ENCODE measurements at regions of chr5 and their contacts with region 1.

Region 1: DNA sequence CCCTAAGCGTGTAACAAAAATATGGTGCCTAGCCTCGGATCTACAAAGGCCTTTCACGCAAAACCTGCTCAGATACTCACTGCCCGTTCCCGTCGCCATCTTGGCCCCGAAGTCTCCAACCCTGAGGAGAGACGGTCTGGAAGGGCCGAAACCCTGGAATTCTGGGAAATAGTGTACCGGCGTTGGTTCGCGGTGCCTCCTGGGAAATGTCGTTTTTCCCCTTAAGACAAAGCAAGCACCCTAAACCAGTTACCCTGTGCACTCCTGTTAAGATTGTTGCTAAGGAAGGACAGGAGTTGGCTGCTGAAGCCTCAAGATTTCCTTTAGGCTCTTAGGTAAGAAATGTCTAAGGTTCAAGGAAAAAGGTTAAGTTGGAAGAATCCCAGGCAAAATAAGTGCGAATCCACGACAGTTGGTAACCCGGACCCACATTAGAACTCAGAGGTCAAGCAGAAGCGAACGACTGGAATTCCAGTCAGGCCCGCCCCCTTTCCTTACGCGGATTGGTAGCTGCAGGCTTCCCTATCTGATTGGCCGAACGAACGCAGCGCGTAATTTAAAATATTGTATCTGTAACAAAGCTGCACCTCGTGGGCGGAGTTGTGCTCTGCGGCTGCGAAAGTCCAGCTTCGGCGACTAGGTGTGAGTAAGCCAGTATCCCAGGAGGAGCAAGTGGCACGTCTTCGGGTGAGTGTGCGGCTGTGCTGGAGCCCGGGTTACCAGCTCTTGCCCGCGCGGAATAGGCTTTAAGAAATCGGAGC is at the starts of genes BRD8 and KIF20A:
- DNase-seq: peak; percentile 100
- H3K4me3 Mint-ChIP-seq: no peak within 1 kb of the TSS
- H3K27ac Mint-ChIP-seq: no peak within 1 kb of the TSS
- H3K4me1 Mint-ChIP-seq: peaks cover 17% of the 10 kb centered on the region
- H3K27me3 Mint-ChIP-seq: no peaks in the 10 kb centered on the region
- CTCF ChIP-seq: no peak
- total RNA-seq, gene BRD8: 93.4 and 108 TPM in 2 replicates
- total RNA-seq, gene KIF20A: 19.0 and 30.6 TPM in 2 replicates

Region 2: DNA sequence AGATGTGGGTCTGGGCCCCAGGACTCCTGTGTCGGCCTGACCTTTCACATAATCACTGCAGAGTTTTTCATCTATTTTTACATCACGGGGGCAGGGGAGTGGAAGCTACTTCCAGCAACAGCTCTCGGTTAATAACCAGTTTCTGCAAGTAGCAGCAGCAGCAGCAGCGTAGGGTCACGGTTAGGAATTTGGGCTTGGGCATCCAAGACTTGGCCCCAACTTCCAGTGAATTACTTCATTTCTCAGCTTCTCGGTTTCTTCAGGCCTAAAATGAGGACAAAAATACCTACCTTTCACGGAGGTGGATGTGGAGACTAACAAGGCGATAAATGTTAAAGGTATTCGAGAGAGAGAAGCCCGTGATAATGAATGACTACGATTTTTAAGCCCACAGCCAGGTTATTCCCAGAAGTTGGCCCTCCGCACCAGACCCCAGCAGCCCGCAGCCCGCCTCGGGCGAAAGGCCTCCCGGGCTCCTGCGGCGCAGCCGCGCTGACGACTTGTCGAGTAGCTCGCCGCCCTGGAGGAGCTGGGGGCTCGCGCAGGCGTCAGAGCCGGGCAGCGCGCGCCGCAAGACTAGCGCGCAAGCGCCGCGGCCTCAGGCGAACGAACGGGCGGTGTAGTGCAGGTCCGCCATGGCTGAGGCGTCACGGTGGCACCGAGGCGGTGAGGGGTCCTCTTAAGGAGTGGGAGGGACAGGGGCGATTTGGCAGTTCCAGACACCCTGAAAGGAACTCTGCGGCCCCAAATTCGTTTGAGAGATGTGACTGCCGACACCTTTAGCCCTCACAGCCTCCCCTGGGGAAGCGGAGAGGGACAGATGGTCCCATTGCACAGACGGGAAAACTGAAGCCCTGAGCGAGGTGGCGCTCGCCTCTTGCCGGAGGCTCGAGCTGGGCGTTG is 289.6 kb before region 1 on chr5 and contains the start of gene PKD2L2:
- CTCF ChIA-PET with region 1: no interaction called
- POLR2A ChIA-PET with region 1: no interaction called
- intact Hi-C with region 1: no loop called
- DNase-seq: no peak
- H3K4me3 Mint-ChIP-seq: peak within 1 kb of the TSS; percentile 21
- H3K27ac Mint-ChIP-seq: no peak within 1 kb of the TSS
- H3K4me1 Mint-ChIP-seq: no peaks in the 10 kb centered on the region
- H3K27me3 Mint-ChIP-seq: no peaks in the 10 kb centered on the region
- CTCF ChIP-seq: no peak
- total RNA-seq, gene PKD2L2: not detected in 2 replicates

Region 3: DNA sequence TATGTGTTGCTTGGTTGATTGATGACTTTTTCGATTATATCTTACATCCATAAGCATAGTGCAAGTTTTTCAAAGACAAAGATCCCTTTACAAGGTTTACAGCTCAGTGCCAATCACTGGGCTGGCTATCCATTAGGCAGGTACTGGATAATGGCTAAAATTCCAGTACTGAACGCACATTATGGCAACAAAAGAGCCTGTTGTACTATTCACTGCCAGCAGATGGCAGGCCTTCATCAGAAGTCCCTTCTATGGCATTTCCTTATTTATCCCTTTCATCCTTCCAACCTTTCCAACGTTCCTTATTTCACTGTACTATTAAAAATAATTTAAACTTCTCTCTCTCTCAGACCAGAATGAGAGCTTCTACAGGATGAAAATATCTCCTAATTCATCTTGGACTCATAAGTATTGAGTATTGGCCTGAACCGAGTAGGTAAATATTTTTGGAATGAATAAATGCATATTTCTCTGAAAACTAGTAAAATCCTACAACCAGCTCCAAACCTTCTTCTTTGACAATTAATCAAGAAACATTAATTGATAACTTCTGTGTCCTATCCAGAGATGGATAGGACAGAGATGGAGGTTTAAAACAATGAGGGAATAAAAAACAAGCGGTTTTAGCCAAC is 101.5 kb before region 1 on chr5:
- CTCF ChIA-PET with region 1: interaction called, 8 read pairs
- POLR2A ChIA-PET with region 1: no interaction called
- intact Hi-C with region 1: loop called (anchors 1 kb)
- DNase-seq: peak; percentile 82
- H3K4me3 Mint-ChIP-seq: no peak overlapping the region
- H3K27ac Mint-ChIP-seq: no peak overlapping the region
- H3K4me1 Mint-ChIP-seq: no peaks in the 10 kb centered on the region
- H3K27me3 Mint-ChIP-seq: no peaks in the 10 kb centered on the region
- CTCF ChIP-seq: peak; percentile 95

Region 4: DNA sequence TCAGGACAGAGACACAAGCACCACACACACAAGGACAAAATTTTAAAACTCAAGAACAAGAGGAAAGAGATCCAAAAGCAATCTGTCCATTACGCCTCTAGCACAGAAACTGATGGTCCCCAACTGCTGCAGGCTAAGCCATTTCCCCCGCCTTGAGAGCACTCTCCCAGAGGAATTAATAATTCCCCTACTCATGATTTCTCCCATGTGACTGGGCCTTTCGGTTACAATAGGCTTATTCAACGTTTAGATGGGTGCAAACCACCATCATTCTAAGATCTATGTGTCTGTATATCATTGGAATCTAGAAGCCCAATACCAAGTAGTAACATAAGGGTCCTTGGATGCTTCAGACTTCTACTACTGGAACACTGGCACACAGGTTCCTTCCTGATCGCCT is 19.0 kb before region 1 on chr5:
- CTCF ChIA-PET with region 1: interaction called, 11 read pairs
- POLR2A ChIA-PET with region 1: interaction called, 9 read pairs
- intact Hi-C with region 1: no loop called
- DNase-seq: no peak
- H3K4me3 Mint-ChIP-seq: no peak overlapping the region
- H3K27ac Mint-ChIP-seq: no peak overlapping the region
- H3K4me1 Mint-ChIP-seq: no peaks in the 10 kb centered on the region
- H3K27me3 Mint-ChIP-seq: no peaks in the 10 kb centered on the region
- CTCF ChIP-seq: no peak

Region 5: DNA sequence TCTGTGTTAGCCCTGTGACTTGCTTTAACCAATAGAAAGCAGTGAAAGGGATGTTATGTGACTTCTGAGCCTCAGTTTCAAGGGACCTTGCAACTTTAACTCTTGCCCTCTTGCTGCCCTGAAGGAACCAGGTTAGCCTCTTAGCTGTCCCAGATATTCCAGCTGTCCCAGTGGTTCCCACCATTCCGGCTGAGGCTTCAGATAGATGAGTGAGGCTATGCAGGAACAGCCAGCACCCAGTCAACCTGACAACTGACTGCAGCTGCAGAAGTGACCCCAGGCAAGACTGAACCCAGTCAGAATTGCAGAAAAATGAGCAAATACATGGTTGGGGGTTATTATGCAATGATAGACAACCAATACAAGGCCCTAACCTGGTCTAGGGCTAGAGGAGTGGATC is 44.8 kb after region 1 on chr5:
- CTCF ChIA-PET with region 1: interaction called, 12 read pairs
- POLR2A ChIA-PET with region 1: interaction called, 4 read pairs
- intact Hi-C with region 1: no loop called
- DNase-seq: no peak
- H3K4me3 Mint-ChIP-seq: no peak overlapping the region
- H3K27ac Mint-ChIP-seq: no peak overlapping the region
- H3K4me1 Mint-ChIP-seq: peaks cover 7% of the 10 kb centered on the region
- H3K27me3 Mint-ChIP-seq: no peaks in the 10 kb centered on the region
- CTCF ChIP-seq: no peak

Region 6: DNA sequence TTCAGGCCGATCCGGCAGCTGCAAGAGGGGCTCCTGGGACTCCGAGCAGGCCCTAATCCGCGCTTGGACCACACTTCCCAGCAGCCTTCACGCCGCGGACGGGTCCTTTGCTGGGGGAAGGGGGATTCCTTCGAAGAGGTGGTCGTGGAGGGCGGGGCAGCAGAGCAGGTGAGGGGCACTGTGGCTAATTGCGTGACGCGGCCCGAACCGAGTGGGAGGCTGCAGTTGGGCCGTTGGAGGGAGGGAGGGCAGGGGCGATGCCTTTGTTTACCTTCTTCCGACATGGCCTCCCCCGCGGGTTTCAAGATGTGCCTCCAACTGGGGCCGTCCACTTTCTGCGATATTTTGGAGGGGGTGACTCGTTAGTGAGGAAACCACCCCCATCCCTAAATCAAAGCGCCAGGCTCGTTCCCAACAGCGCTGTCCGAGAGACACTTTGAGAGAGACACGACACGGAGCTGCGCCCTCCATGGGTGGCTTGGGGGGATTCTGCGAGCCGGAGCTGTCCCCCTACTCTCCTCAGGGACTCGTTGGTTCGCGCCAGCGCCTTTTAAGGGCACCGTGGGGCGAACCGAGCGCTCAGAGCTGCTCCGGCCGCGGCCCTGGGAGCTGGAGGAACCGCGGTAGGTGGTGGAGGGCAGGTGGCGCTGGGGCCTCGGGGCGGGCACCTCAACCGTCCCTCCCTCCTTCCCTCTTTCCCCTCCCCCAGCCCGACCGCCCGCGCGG is 159.2 kb after region 1 on chr5 and contains the start of gene FAM53C:
- CTCF ChIA-PET with region 1: no interaction called
- POLR2A ChIA-PET with region 1: interaction called, 16 read pairs
- intact Hi-C with region 1: no loop called
- DNase-seq: peak; percentile 97
- H3K4me3 Mint-ChIP-seq: peak within 1 kb of the TSS; percentile 88
- H3K27ac Mint-ChIP-seq: peak within 1 kb of the TSS; percentile 100
- H3K4me1 Mint-ChIP-seq: peaks cover 48% of the 10 kb centered on the region
- H3K27me3 Mint-ChIP-seq: no peaks in the 10 kb centered on the region
- CTCF ChIP-seq: no peak
- total RNA-seq, gene FAM53C: 37.2 and 38.9 TPM in 2 replicates

Region 7: DNA sequence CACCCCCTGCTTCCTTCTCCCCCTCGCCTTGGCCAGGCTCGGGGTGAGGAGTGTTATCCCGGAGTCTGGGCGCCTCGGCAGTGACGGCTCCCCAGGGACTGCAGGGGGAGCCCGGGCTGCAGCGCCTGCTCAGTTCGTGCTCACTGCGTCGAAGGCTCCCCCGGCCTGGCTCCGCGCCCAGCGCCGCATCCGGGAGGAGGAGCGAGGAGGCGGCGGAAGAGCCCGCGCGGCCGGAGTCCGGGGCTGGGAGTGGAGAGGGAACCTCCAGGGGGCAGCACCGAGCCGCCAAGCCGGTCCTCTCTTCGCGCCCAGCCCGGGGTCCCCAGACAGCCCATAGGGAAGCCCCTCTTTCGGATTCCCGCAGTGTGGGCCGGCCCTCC is 285.3 kb after region 1 on chr5:
- CTCF ChIA-PET with region 1: no interaction called
- POLR2A ChIA-PET with region 1: interaction called, 33 read pairs
- intact Hi-C with region 1: no loop called
- DNase-seq: peak; percentile 98
- H3K4me3 Mint-ChIP-seq: peak overlapping the region; percentile 78
- H3K27ac Mint-ChIP-seq: peak overlapping the region; percentile 93
- H3K4me1 Mint-ChIP-seq: peaks cover 45% of the 10 kb centered on the region
- H3K27me3 Mint-ChIP-seq: peaks cover 20% of the 10 kb centered on the region
- CTCF ChIP-seq: peak; percentile 97

Region 8: GRCh38 chr5:139262742-139263445 is 1084.2 kb after region 1 on chr5:
- CTCF ChIA-PET with region 1: no interaction called
- POLR2A ChIA-PET with region 1: no interaction called
- intact Hi-C with region 1: loop called (anchors 2 kb)
- DNase-seq: peak; percentile 94
- H3K4me3 Mint-ChIP-seq: no peak overlapping the region
- H3K27ac Mint-ChIP-seq: no peak overlapping the region
- H3K4me1 Mint-ChIP-seq: peaks cover 11% of the 10 kb centered on the region
- H3K27me3 Mint-ChIP-seq: no peaks in the 10 kb centered on the region
- CTCF ChIP-seq: peak; percentile 99